A549 (cell line): ENCODE measurements at regions of chr17 and their contacts with region 1.

Region 1: GRCh38 chr17:39621523-39622379 is 5.0 kb upstream of the PPP1R1B start:
- DNase-seq: peak; percentile 86 to 94
- ATAC-seq: peak; percentile 44 to 77
- H3K4me3 ChIP-seq: peak overlapping the region; percentile 12; the same call in 1 of the 3 replicates
- H3K27ac ChIP-seq: 0 out of 6 replicates have a peak overlapping the region, but pooled peaks of 1 of the 2 experiments have one; percentile 5
- H3K4me1 ChIP-seq: peaks cover 15% of the 10 kb centered on the region
- CTCF ChIP-seq: peak; percentile 100
- EP300 ChIP-seq: no peak
- POLR2A ChIP-seq: no peak
- RAD21 ChIP-seq: peak; percentile 96 to 97

Region 2: GRCh38 chr17:39341541-39341940 is 280.2 kb before region 1 on chr17:
- CTCF ChIA-PET with region 1: no interaction called
- POLR2A ChIA-PET with region 1: no interaction called
- DNase-seq: no peak
- ATAC-seq: no peak
- H3K4me3 ChIP-seq: no peak overlapping the region
- H3K27ac ChIP-seq: no peak overlapping the region
- H3K4me1 ChIP-seq: no peaks in the 10 kb centered on the region
- CTCF ChIP-seq: no peak
- EP300 ChIP-seq: no peak
- POLR2A ChIP-seq: no peak
- RAD21 ChIP-seq: no peak

Region 3: DNA sequence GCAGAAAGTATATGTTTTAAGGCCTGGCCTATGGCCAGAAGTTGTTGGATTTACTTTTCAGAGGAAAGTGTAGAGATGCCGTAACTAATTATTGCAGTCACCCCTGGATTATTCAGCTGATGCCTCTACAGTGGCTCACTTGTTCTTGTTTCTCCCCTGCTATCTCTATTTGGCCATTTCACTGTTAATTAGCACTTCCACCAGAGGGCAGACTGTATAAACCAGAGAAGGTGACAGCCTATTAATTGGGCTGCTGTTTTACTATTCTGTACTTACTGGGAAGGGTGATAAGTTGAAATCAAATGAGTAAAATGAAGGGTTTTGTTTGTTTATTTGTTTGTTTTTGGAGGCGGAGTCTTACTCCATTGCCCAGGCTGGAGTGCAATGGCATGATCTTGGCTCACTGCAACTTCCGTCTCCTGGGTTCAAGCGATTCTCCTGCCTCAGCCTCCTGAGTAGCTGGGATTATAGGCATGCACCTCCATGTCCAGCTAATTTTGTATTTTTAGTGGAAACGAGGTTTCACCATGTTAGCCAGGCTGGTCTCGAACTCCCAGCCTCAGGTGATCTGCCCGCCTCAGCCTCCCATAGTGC is 94.4 kb before region 1 on chr17:
- CTCF ChIA-PET with region 1: interaction called, 27 read pairs
- POLR2A ChIA-PET with region 1: no interaction called
- DNase-seq: peak in 1 of 2 experiments; percentile 37
- ATAC-seq: peak; percentile 72 to 80
- H3K4me3 ChIP-seq: no peak overlapping the region
- H3K27ac ChIP-seq: no peak overlapping the region
- H3K4me1 ChIP-seq: no peaks in the 10 kb centered on the region
- CTCF ChIP-seq: peak; percentile 60
- EP300 ChIP-seq: no peak
- POLR2A ChIP-seq: no peak
- RAD21 ChIP-seq: peak in 1 of 2 experiments; percentile 25; a peak in 1 of 5 replicates

Region 4: DNA sequence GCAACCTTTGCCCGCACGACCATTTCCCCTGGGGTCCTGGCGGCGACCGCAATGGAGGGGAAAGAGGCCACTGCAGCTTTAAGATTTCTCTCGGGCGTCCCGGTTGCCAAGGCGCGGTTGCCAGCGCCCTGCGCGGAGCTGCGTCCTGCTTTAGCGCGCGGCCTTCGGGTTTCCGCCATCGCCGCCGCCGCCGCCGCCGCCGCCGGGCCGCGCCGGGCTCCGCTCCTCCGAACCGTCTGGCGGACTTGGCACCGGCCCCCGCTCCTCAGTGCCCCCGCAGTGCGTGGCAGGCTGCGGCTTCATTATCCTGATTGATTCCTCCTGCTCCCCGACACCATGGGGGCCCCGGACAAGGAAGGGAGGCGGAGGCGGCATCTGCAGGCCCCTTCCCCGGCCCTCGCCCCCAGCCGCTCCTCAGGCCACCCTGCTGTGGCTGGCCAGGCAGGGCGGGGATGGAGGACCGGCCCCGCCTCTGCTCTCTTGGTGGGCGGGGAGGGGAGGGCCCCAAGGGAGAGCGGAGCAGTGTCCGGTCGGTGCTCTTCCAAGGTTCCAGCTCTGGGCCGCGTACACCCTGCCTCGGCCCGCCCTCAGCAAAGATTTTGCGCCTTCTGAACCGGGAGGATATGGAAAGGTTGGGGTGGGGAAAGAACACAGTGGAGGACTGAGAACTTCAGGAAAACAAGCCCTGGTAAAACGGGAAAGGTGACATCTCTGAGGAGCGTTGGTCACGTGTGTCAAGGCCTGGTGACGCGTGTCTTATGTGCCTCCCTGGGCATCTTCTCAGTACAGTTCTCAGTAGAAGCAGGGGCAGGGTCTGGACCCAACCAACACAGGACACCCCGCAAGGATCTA is 48.1 kb before region 1 on chr17:
- CTCF ChIA-PET with region 1: interaction called, 118 read pairs
- POLR2A ChIA-PET with region 1: no interaction called
- DNase-seq: peak; percentile 81 to 95
- ATAC-seq: peak; percentile 91 to 96
- H3K4me3 ChIP-seq: peak overlapping the region; percentile 57
- H3K27ac ChIP-seq: peak overlapping the region; percentile 74 to 90
- H3K4me1 ChIP-seq: peaks cover 5% of the 10 kb centered on the region; the same call in 2 of the 3 replicates
- CTCF ChIP-seq: no peak
- EP300 ChIP-seq: no peak
- POLR2A ChIP-seq: peak; percentile 44
- RAD21 ChIP-seq: no peak

Region 5: GRCh38 chr17:39730095-39730921 is 108.6 kb after region 1 on chr17 and contains the start of gene MIEN1:
- CTCF ChIA-PET with region 1: interaction called, 50 read pairs
- POLR2A ChIA-PET with region 1: interaction called, 6 read pairs
- DNase-seq: peak; percentile 91 to 95
- ATAC-seq: peak; percentile 82 to 90
- H3K4me3 ChIP-seq: peak within 1 kb of the TSS; percentile 60
- H3K27ac ChIP-seq: peak within 1 kb of the TSS; percentile 93 to 94
- H3K4me1 ChIP-seq: peaks cover 6% of the 10 kb centered on the region
- CTCF ChIP-seq: peak; percentile 96
- EP300 ChIP-seq: no peak
- POLR2A ChIP-seq: peak; percentile 78
- RAD21 ChIP-seq: peak; percentile 61 to 86
- polyA plus RNA-seq, gene MIEN1: 63.9 and 111 TPM in 2 replicates

Region 6: DNA sequence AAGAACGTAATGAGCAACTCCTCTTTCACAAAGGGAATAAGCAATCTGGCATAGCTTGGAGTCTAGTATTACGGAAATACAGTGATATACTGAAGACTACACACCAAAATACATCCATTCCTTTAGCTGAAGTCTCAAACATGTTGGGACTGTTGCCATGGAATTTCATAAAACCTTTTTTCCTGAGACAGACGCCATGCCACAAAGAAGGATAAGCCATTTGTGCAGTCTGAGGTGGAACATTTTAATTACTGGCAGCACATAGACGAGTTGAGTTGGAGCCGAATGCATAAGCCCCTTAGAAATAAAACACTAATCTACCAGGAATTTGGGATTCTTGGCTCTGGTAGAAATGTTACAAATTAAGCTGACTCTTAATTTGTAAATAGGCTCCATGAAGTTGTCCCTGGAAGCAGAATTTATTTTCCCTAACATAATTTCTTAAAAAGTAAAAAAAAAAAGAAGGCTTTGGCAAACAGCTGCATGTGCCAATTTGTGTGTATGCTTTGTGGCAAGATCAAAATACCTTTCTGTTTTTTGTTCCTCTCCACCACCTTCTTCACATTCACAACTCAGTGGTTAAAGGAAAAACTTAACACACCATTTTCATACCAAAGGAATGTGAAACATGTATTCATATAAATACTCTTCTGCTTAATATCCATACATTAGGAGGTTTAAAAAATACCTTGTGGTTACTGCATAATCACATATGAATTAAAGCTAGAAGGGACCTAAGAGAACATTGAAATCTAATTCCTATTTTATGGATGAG is 141.5 kb after region 1 on chr17:
- CTCF ChIA-PET with region 1: interaction called, 26 read pairs
- POLR2A ChIA-PET with region 1: no interaction called
- DNase-seq: no peak
- ATAC-seq: no peak
- H3K4me3 ChIP-seq: no peak overlapping the region
- H3K27ac ChIP-seq: no peak overlapping the region
- H3K4me1 ChIP-seq: no peaks in the 10 kb centered on the region
- CTCF ChIP-seq: no peak
- EP300 ChIP-seq: no peak
- POLR2A ChIP-seq: no peak
- RAD21 ChIP-seq: no peak